CD8-positive, alpha-beta T cell (primary cell): ENCODE measurements at regions of chr1 and their contacts with region 1.

Region 1: GRCh38 chr1:171188388-171189266 is 3.5 kb downstream of the FMO2 start:
- DNase-seq: peak in 7 of 9 experiments; percentile 1 to 51 (median 33)
- ATAC-seq: no peak
- H3K4me3 ChIP-seq: no peak overlapping the region
- H3K4me3 Mint-ChIP-seq: no peak overlapping the region
- H3K27ac ChIP-seq: no peak overlapping the region
- H3K27ac Mint-ChIP-seq: no peak overlapping the region
- H3K4me1 ChIP-seq: no peaks in the 10 kb centered on the region
- H3K4me1 Mint-ChIP-seq: no peaks in the 10 kb centered on the region
- H3K27me3 ChIP-seq: no peaks in the 10 kb centered on the region
- H3K27me3 Mint-ChIP-seq: peaks cover 15% of the 10 kb centered on the region
- CTCF ChIP-seq: peak; percentile 67

Region 2: GRCh38 chr1:169928438-169929209 is 1260.0 kb before region 1 on chr1:
- CTCF ChIA-PET with region 1: no interaction called
- POLR2A ChIA-PET with region 1: no interaction called
- intact Hi-C with region 1: loop called (anchors 2 to 5 kb)
- DNase-seq: peak in 2 of 9 experiments; percentile 52 to 66
- ATAC-seq: peak; percentile 58
- H3K4me3 ChIP-seq: no peak overlapping the region
- H3K4me3 Mint-ChIP-seq: no peak overlapping the region
- H3K27ac ChIP-seq: no peak overlapping the region
- H3K27ac Mint-ChIP-seq: no peak overlapping the region
- H3K4me1 ChIP-seq: no peaks in the 10 kb centered on the region
- H3K4me1 Mint-ChIP-seq: peaks cover 6% of the 10 kb centered on the region
- H3K27me3 ChIP-seq: no peaks in the 10 kb centered on the region
- H3K27me3 Mint-ChIP-seq: no peaks in the 10 kb centered on the region
- CTCF ChIP-seq: peak; percentile 93

Region 3: GRCh38 chr1:169933984-169934725 is 1254.5 kb before region 1 on chr1:
- CTCF ChIA-PET with region 1: no interaction called
- POLR2A ChIA-PET with region 1: no interaction called
- intact Hi-C with region 1: loop called (anchors 2 to 5 kb)
- DNase-seq: no peak
- ATAC-seq: no peak
- H3K4me3 ChIP-seq: no peak overlapping the region
- H3K4me3 Mint-ChIP-seq: no peak overlapping the region
- H3K27ac ChIP-seq: no peak overlapping the region
- H3K27ac Mint-ChIP-seq: no peak overlapping the region
- H3K4me1 ChIP-seq: no peaks in the 10 kb centered on the region
- H3K4me1 Mint-ChIP-seq: no peaks in the 10 kb centered on the region
- H3K27me3 ChIP-seq: no peaks in the 10 kb centered on the region
- H3K27me3 Mint-ChIP-seq: no peaks in the 10 kb centered on the region
- CTCF ChIP-seq: no peak

Region 4: DNA sequence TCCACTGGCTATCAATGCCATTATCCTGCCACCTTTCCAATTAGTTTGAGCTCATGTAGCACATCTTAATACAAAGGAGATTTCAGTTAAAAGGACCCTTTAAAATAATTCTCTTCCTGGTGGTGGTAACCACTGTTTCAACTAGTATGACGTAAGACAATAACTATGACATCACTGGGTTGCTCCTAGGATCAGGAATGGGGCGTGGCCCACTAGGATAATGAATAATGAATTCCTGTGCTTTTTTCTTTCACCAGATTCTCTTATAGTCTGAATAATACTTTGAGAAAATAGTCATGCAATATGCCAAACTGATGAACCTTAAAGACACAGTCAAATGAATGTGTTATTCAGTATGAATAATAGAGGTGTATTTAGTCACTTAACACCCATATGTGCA is 1103.5 kb before region 1 on chr1:
- CTCF ChIA-PET with region 1: no interaction called
- POLR2A ChIA-PET with region 1: no interaction called
- intact Hi-C with region 1: no loop called
- DNase-seq: no peak
- ATAC-seq: no peak
- H3K4me3 ChIP-seq: no peak overlapping the region
- H3K4me3 Mint-ChIP-seq: no peak overlapping the region
- H3K27ac ChIP-seq: no peak overlapping the region
- H3K27ac Mint-ChIP-seq: no peak overlapping the region
- H3K4me1 ChIP-seq: no peaks in the 10 kb centered on the region
- H3K4me1 Mint-ChIP-seq: no peaks in the 10 kb centered on the region
- H3K27me3 ChIP-seq: no peaks in the 10 kb centered on the region
- H3K27me3 Mint-ChIP-seq: peaks cover 18% of the 10 kb centered on the region
- CTCF ChIP-seq: no peak

Region 5: GRCh38 chr1:170261669-170262348 is 926.8 kb before region 1 on chr1:
- CTCF ChIA-PET with region 1: no interaction called
- POLR2A ChIA-PET with region 1: no interaction called
- intact Hi-C with region 1: no loop called
- DNase-seq: no peak
- ATAC-seq: no peak
- H3K4me3 ChIP-seq: no peak overlapping the region
- H3K4me3 Mint-ChIP-seq: no peak overlapping the region
- H3K27ac ChIP-seq: no peak overlapping the region
- H3K27ac Mint-ChIP-seq: no peak overlapping the region
- H3K4me1 ChIP-seq: no peaks in the 10 kb centered on the region
- H3K4me1 Mint-ChIP-seq: no peaks in the 10 kb centered on the region
- H3K27me3 ChIP-seq: no peaks in the 10 kb centered on the region
- H3K27me3 Mint-ChIP-seq: peaks cover 10% of the 10 kb centered on the region
- CTCF ChIP-seq: no peak

Region 6: DNA sequence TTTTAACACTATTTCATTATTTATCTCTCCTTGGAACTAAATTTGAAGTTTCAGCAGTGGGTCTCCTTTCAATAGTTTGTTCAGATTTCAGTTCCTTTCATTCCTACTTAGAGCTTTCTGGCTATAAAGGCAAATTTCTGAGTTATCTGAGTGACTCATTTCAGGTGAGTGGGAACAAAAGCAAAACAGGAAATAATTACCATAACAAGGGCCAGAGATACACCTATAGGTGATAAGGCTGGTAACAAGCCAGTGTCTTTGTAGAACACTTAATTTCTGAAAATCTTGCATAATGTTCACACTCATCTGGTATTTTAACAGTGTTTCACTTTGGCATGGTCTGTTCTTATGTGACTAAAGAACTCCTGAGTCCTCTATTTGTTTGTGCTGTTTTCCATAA is 232.2 kb after region 1 on chr1:
- CTCF ChIA-PET with region 1: no interaction called
- POLR2A ChIA-PET with region 1: no interaction called
- intact Hi-C with region 1: no loop called
- DNase-seq: peak in 1 of 9 experiments; percentile 8
- ATAC-seq: peak; percentile 59
- H3K4me3 ChIP-seq: no peak overlapping the region
- H3K4me3 Mint-ChIP-seq: no peak overlapping the region
- H3K27ac ChIP-seq: no peak overlapping the region
- H3K27ac Mint-ChIP-seq: peak overlapping the region; percentile 10
- H3K4me1 ChIP-seq: peaks cover 11% of the 10 kb centered on the region
- H3K4me1 Mint-ChIP-seq: peaks cover 17% of the 10 kb centered on the region
- H3K27me3 ChIP-seq: no peaks in the 10 kb centered on the region
- H3K27me3 Mint-ChIP-seq: no peaks in the 10 kb centered on the region
- CTCF ChIP-seq: no peak